K562 (cell line): ENCODE measurements at regions of chr9 and their contacts with region 1.

Region 1: GRCh38 chr9:76403352-76403751 is 9.1 kb upstream of the RFK start:
- DNase-seq: peak in 2 of 4 experiments; percentile 9 to 11
- ATAC-seq: peak; percentile 64
- H3K4me3 ChIP-seq: no peak overlapping the region
- H3K27ac ChIP-seq: no peak overlapping the region
- H3K4me1 ChIP-seq: 0 out of 5 replicates have a peak, but pooled peaks cover 0 to 3% of the 10 kb centered on the region in 2 experiments
- H3K27me3 ChIP-seq: no peaks in the 10 kb centered on the region
- CTCF ChIP-seq: peak; percentile 29 to 64 (median 55); a peak in 3 of 6 replicates
- EP300 ChIP-seq: no peak
- POLR2A ChIP-seq: no peak
- RAD21 ChIP-seq: peak; percentile 38 to 45; a peak in 3 of 4 replicates

Region 2: DNA sequence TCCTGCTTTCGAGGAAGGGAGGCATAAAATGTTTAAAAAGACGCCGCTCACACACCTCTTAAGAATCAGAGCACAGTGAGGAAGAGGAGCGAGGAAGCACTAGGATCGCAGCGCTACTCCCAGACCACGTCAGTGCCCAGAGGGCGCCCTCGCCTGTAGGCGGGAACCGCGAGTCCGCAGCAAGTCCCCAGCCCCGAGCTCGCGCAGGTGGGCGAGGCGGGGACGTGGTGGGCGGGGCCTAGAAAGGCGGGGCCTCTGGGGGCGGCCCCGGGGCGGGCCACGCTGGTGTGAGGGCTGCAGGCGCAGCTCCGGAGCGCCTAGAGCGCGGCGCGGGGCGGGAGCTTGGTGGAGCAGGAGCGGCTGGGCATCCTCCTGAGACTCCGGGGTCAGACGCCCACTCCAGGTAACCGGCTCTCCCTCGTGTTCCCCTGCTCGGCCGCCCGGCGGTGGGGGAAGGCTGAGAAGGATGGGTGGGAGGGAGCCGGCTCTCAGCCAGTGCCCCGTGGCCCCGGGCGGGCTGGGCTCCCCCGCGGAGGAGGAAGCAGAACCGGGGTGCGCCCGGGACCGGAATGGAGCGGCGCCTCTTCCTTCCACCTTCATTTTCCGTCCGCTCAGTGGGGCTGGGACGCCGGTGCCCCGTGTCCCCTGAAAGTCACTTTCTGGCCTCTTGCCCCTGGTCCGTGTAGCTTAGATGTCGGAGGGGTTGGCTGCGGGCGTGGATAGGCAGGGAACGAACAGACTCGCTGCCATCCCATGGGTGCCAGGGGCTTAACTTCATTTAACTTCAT is 55.7 kb after region 1 on chr9 and contains the start of gene GCNT1:
- CTCF ChIA-PET with region 1: no interaction called
- POLR2A ChIA-PET with region 1: no interaction called
- in situ Hi-C with region 1: no loop called
- intact Hi-C with region 1: loop called (anchors 10 kb)
- DNase-seq: peak; percentile 83 to 90 (median 88)
- ATAC-seq: peak; percentile 100
- H3K4me3 ChIP-seq: peak within 1 kb of the TSS; percentile 34
- H3K27ac ChIP-seq: no peak within 1 kb of the TSS
- H3K4me1 ChIP-seq: peaks cover 4 to 13% of the 10 kb centered on the region in 2 experiments; a peak in 3 of 5 replicates
- H3K27me3 ChIP-seq: peaks cover 0 to 4% of the 10 kb centered on the region in 2 experiments; a peak in 1 of 5 replicates
- CTCF ChIP-seq: peak; percentile 34 to 51 (median 35); a peak in 4 of 6 replicates
- EP300 ChIP-seq: no peak
- POLR2A ChIP-seq: no peak
- RAD21 ChIP-seq: peak; percentile 26 to 41; a peak in 2 of 4 replicates
- polyA plus RNA-seq, gene GCNT1: 0.01 to 0.07 TPM

Region 3: DNA sequence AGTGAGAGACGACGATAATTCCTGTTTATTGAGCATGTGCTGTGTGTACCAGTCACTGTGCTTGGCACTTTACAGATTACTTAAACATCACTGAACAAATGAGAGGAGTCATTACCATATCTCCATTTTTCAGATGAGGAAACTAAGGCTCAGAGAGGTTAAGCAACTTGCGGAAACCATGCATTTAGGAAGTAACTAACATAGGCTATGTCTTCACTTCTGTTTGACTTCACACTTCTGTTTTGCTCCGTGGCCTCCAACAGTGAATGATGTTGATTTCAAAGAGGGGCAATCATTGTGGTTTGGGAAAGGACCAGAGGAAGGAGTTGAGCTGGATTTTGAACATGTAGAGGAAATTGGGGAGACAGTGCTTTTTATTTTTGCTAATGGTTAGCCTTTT is 72.3 kb after region 1 on chr9:
- CTCF ChIA-PET with region 1: no interaction called
- POLR2A ChIA-PET with region 1: no interaction called
- in situ Hi-C with region 1: no loop called
- intact Hi-C with region 1: no loop called
- DNase-seq: no peak
- ATAC-seq: no peak
- H3K4me3 ChIP-seq: no peak overlapping the region
- H3K27ac ChIP-seq: no peak overlapping the region
- H3K4me1 ChIP-seq: no peaks in the 10 kb centered on the region
- H3K27me3 ChIP-seq: no peaks in the 10 kb centered on the region; a peak in 2 of 5 replicates
- CTCF ChIP-seq: no peak
- EP300 ChIP-seq: no peak
- POLR2A ChIP-seq: no peak
- RAD21 ChIP-seq: no peak

Region 4: GRCh38 chr9:76571288-76571687 is 167.9 kb after region 1 on chr9:
- CTCF ChIA-PET with region 1: no interaction called
- POLR2A ChIA-PET with region 1: no interaction called
- in situ Hi-C with region 1: no loop called
- intact Hi-C with region 1: no loop called
- DNase-seq: no peak
- ATAC-seq: no peak
- H3K4me3 ChIP-seq: no peak overlapping the region
- H3K27ac ChIP-seq: no peak overlapping the region
- H3K4me1 ChIP-seq: peaks cover 0 to 4% of the 10 kb centered on the region in 2 experiments; a peak in 2 of 5 replicates
- H3K27me3 ChIP-seq: peaks cover 0 to 12% of the 10 kb centered on the region in 2 experiments; a peak in 2 of 5 replicates
- CTCF ChIP-seq: no peak
- EP300 ChIP-seq: no peak
- POLR2A ChIP-seq: no peak
- RAD21 ChIP-seq: no peak